Right cardiac atrium (tissue), 5 donors: ENCODE measurements at regions of chr2 and their contacts with region 1.

Region 1: DNA sequence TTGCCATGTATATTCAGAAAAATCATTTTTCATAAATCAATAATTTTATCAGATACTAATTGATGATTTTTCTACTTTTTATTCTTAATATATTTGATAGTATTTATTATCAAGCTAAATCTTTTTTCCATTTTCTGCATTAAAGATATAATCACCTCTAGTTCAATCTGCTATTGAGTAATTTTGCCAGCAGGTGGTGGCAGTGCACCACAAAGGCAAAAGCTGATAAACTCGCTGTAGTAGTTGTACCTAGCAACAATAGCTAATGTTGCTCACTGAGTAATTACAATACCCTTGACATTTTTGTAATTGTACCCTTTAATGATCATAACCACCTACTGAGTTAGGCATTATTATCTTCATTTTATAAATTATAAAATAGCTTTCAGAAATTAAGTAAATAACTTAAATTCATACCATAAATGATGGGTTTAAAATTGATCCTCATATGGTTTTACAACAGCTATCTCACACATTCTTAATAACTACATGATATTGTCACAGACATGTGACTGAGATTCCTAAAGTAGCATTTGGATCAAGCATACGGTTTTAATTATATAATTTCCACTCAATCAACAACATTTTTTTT is 52.0 kb upstream of the CALCRL start:
- DNase-seq: peak; percentile 45 to 66 (median 51)
- ATAC-seq: peak; percentile 75 to 81
- H3K4me3 ChIP-seq: no peak overlapping the region
- H3K27ac ChIP-seq: no peak overlapping the region
- H3K4me1 ChIP-seq: peaks cover under 1% of the 10 kb centered on the region
- H3K27me3 ChIP-seq: no peaks in the 10 kb centered on the region

Region 2: DNA sequence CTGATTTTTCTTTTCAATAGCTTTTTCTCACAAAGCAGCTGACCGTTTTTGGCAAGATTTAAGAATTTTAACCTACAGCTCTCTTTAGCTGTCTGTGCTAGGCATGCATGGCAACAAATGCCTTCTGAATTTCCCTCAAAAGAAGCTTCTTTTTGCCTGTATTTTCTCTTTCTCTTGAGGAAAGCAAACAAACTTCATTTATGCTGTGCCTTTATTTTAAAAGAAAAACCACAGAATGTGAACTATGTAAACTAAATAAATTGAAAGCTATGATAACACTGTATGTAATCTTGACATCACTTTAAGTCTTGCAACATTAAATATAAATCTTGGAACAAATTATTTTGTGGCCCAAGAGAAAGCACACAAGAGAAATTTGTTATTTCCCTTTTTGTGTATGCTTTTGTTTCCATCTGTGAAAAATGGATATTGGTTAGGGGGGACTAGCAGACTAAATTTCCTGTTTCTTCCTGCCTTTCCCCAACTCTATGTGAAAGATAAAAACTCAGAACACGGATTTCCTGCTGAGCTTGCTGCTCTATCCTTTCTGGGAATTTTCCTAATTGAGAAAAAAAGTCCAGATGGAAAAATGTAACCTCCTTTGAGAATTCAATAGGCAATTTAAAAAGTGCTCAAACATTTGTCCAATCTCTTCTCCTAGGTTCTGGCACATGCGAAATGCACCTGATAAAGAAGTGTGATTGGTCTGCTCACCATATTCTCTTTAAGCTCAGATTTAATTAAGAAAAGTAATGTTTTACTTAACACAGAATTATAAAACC is 75.1 kb after region 1 on chr2:
- intact Hi-C with region 1: loop called (anchors 5 kb)
- DNase-seq: no peak
- ATAC-seq: peak in 1 of 2 donors; percentile 52
- H3K4me3 ChIP-seq: no peak overlapping the region
- H3K27ac ChIP-seq: no peak overlapping the region
- H3K4me1 ChIP-seq: no peaks in the 10 kb centered on the region
- H3K27me3 ChIP-seq: no peaks in the 10 kb centered on the region

Region 3: GRCh38 chr2:187581125-187581896 is 81.3 kb after region 1 on chr2:
- intact Hi-C with region 1: loop called (anchors 5 kb)
- DNase-seq: no peak
- ATAC-seq: peak; percentile 37 to 50
- H3K4me3 ChIP-seq: peak overlapping the region; percentile 59
- H3K27ac ChIP-seq: no peak overlapping the region
- H3K4me1 ChIP-seq: no peaks in the 10 kb centered on the region
- H3K27me3 ChIP-seq: no peaks in the 10 kb centered on the region

Region 4: GRCh38 chr2:187842978-187843847 is 343.2 kb after region 1 on chr2:
- intact Hi-C with region 1: loop called in 1 of 4 experiments (anchors 10 kb)
- DNase-seq: no peak
- ATAC-seq: peak in 1 of 2 donors; percentile 32
- H3K4me3 ChIP-seq: no peak overlapping the region
- H3K27ac ChIP-seq: no peak overlapping the region
- H3K4me1 ChIP-seq: no peaks in the 10 kb centered on the region
- H3K27me3 ChIP-seq: no peaks in the 10 kb centered on the region

Region 5: GRCh38 chr2:189412330-189412953 is 1912.4 kb after region 1 on chr2:
- intact Hi-C with region 1: loop called in 1 of 4 experiments (anchors 10 kb)
- DNase-seq: no peak
- ATAC-seq: peak; percentile 59 to 67
- H3K4me3 ChIP-seq: no peak overlapping the region
- H3K27ac ChIP-seq: no peak overlapping the region
- H3K4me1 ChIP-seq: no peaks in the 10 kb centered on the region
- H3K27me3 ChIP-seq: no peaks in the 10 kb centered on the region